Breast epithelium (tissue), 4 donors: ENCODE measurements at regions of chr5 and their contacts with region 1.

Region 1: GRCh38 chr5:92147266-92147665 is 764.1 kb upstream of the ARRDC3 start:
- DNase-seq: no peak
- H3K4me3 ChIP-seq: no peak overlapping the region
- H3K27ac ChIP-seq: no peak overlapping the region
- H3K4me1 ChIP-seq: no peaks in the 10 kb centered on the region
- H3K27me3 ChIP-seq: no peaks in the 10 kb centered on the region
- CTCF ChIP-seq: no peak
- POLR2A ChIP-seq: no peak

Region 2: GRCh38 chr5:91777671-91778070 is 369.6 kb before region 1 on chr5:
- intact Hi-C with region 1: loop called (anchors 10 kb)
- DNase-seq: no peak
- H3K4me3 ChIP-seq: no peak overlapping the region
- H3K27ac ChIP-seq: no peak overlapping the region
- H3K4me1 ChIP-seq: no peaks in the 10 kb centered on the region
- H3K27me3 ChIP-seq: no peaks in the 10 kb centered on the region
- CTCF ChIP-seq: no peak
- POLR2A ChIP-seq: no peak

Region 3: DNA sequence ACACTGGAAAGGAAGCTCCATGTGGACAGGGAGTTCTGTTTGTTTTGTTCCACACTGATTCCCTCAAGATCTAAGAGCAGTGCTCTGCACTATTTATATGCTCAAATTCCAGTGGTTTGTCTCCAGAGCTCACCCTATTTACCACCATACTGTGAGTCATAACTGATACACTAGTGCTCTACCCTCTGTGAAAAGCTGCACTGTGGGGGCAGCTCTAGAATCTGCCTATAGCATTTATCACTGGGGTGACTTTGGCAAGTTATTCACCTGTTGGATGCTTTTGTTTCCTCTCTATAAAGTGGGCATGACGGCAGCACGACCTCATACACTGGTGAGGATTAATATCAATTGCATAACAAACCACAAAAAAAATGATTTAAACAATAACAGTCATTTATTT is 1125.9 kb after region 1 on chr5:
- intact Hi-C with region 1: no loop called
- DNase-seq: no peak
- H3K4me3 ChIP-seq: no peak overlapping the region
- H3K27ac ChIP-seq: no peak overlapping the region
- H3K4me1 ChIP-seq: no peaks in the 10 kb centered on the region
- H3K27me3 ChIP-seq: no peaks in the 10 kb centered on the region
- CTCF ChIP-seq: no peak
- POLR2A ChIP-seq: no peak